ENCODE measurements at regions of chr12 and their contacts with region 1.

Region 1: DNA sequence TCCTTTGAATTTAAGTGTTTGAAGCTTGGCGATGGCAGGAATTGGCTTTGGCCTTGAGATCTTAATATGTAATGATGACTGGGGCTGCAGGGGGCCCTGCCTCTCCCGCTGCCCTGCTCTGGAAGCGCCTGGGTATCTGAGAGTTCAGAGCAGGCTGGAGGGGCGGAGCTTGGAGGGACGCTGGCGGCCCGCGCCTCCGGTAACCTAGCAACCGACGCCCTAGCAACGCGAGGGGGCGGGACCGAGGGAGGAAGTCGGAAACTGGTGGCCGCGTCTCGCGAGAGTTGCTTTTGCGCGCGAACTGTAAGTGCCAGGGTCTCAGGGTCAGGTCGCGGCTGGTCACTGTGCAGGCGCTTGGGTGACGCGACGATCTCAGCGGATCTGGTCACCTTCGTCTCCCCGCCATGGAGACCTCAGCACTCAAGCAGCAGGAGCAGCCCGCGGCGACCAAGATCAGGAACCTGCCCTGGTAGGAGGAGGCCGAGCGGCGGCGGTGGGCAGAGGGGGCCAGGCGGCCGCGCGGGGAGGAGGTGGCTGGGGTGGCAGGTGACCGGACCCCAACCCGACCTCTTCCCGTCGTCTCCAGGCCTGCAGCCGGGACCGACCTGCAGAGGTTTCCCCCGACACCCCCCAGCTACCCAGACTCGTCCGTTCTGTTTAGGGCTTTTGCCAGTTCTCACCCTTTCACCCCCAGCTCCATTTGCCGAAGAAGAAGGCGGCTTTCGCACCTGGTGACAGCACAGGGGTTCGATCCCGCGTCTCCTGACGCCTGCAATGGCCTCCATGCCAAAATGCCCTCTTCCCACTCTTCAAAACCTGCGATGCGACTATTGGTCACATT is at the start of gene RFC5:
- DNase-seq: peak; percentile 98
- H3K4me3 Mint-ChIP-seq: peak within 1 kb of the TSS; percentile 96
- H3K27ac Mint-ChIP-seq: peak within 1 kb of the TSS; percentile 88
- H3K4me1 Mint-ChIP-seq: peaks cover 19% of the 10 kb centered on the region
- H3K27me3 Mint-ChIP-seq: no peaks in the 10 kb centered on the region
- total RNA-seq, gene RFC5: 62.0 to 62.5 TPM

Region 2: GRCh38 chr12:117968826-117969659 is 47.6 kb before region 1 on chr12 and contains the start of gene KSR2:
- CTCF ChIA-PET with region 1: no interaction called
- intact Hi-C with region 1: loop called (anchors 1 kb)
- DNase-seq: peak; percentile 53
- H3K4me3 Mint-ChIP-seq: peak within 1 kb of the TSS; percentile 79
- H3K27ac Mint-ChIP-seq: no peak within 1 kb of the TSS
- H3K4me1 Mint-ChIP-seq: peaks cover 8% of the 10 kb centered on the region
- H3K27me3 Mint-ChIP-seq: peaks cover 62% of the 10 kb centered on the region
- total RNA-seq, gene KSR2: 0.05 TPM in 1 of 2 experiments, not detected in the other

Region 3: GRCh38 chr12:118055144-118055557 is 38.5 kb after region 1 on chr12:
- CTCF ChIA-PET with region 1: interaction called, 7 read pairs
- intact Hi-C with region 1: loop called (anchors 1 kb)
- DNase-seq: peak; percentile 85
- H3K4me3 Mint-ChIP-seq: no peak overlapping the region
- H3K27ac Mint-ChIP-seq: no peak overlapping the region
- H3K4me1 Mint-ChIP-seq: peaks cover 42% of the 10 kb centered on the region
- H3K27me3 Mint-ChIP-seq: no peaks in the 10 kb centered on the region

Region 4: GRCh38 chr12:118135788-118136558 is 119.3 kb after region 1 on chr12 and contains the start of gene PEBP1:
- CTCF ChIA-PET with region 1: no interaction called
- intact Hi-C with region 1: loop called (anchors 1 kb)
- DNase-seq: peak; percentile 95
- H3K4me3 Mint-ChIP-seq: peak within 1 kb of the TSS; percentile 98
- H3K27ac Mint-ChIP-seq: peak within 1 kb of the TSS; percentile 83
- H3K4me1 Mint-ChIP-seq: peaks cover 31% of the 10 kb centered on the region
- H3K27me3 Mint-ChIP-seq: no peaks in the 10 kb centered on the region
- total RNA-seq, gene PEBP1: 117 to 120 TPM

Region 5: GRCh38 chr12:118237052-118237665 is 220.5 kb after region 1 on chr12:
- CTCF ChIA-PET with region 1: no interaction called
- intact Hi-C with region 1: no loop called
- DNase-seq: no peak
- H3K4me3 Mint-ChIP-seq: no peak overlapping the region
- H3K27ac Mint-ChIP-seq: no peak overlapping the region
- H3K4me1 Mint-ChIP-seq: peaks cover 2% of the 10 kb centered on the region
- H3K27me3 Mint-ChIP-seq: no peaks in the 10 kb centered on the region

Measured in activated naive CD4-positive, alpha-beta T cell treated with anti-CD3 and anti-CD28 coated beads for 36 hours (primary cell).